Activated CD4-positive, alpha-beta memory T cell treated with anti-CD3 and anti-CD28 coated beads, Interleukin-2, amount 10 ng/mL, durations not matched to agents 7 days and 5 days (primary cell): ENCODE measurements at regions of chr11 and their contacts with region 1.

Region 1: GRCh38 chr11:62753736-62754603 is at the start of gene ZBTB3:
- DNase-seq: peak; percentile 97
- H3K4me3 Mint-ChIP-seq: peak within 1 kb of the TSS; percentile 95
- H3K27ac Mint-ChIP-seq: peak within 1 kb of the TSS; percentile 93
- H3K4me1 Mint-ChIP-seq: peaks cover 33% of the 10 kb centered on the region
- H3K27me3 Mint-ChIP-seq: no peaks in the 10 kb centered on the region
- total RNA-seq, gene ZBTB3: 13.3 to 13.4 TPM

Region 2: GRCh38 chr11:62627714-62628113 is 126.3 kb before region 1 on chr11:
- CTCF ChIA-PET with region 1: no interaction called
- POLR2A ChIA-PET with region 1: no interaction called
- DNase-seq: no peak
- H3K4me3 Mint-ChIP-seq: no peak overlapping the region
- H3K27ac Mint-ChIP-seq: no peak overlapping the region
- H3K4me1 Mint-ChIP-seq: no peaks in the 10 kb centered on the region
- H3K27me3 Mint-ChIP-seq: no peaks in the 10 kb centered on the region

Region 3: GRCh38 chr11:62771144-62772021 is 17.4 kb after region 1 on chr11 and contains the start of gene TAF6L:
- CTCF ChIA-PET with region 1: interaction called, 10 read pairs
- POLR2A ChIA-PET with region 1: interaction called, 65 read pairs
- DNase-seq: peak; percentile 96
- H3K4me3 Mint-ChIP-seq: peak within 1 kb of the TSS; percentile 87
- H3K27ac Mint-ChIP-seq: peak within 1 kb of the TSS; percentile 88
- H3K4me1 Mint-ChIP-seq: peaks cover 30% of the 10 kb centered on the region
- H3K27me3 Mint-ChIP-seq: no peaks in the 10 kb centered on the region
- total RNA-seq, gene TAF6L: 15.2 to 16.0 TPM

Region 4: GRCh38 chr11:62831520-62832335 is 77.8 kb after region 1 on chr11 and contains the start of gene STX5:
- CTCF ChIA-PET with region 1: interaction called, 8 read pairs
- POLR2A ChIA-PET with region 1: interaction called, 11 read pairs
- DNase-seq: peak; percentile 100
- H3K4me3 Mint-ChIP-seq: peak within 1 kb of the TSS; percentile 84
- H3K27ac Mint-ChIP-seq: peak within 1 kb of the TSS; percentile 91
- H3K4me1 Mint-ChIP-seq: peaks cover 33% of the 10 kb centered on the region
- H3K27me3 Mint-ChIP-seq: no peaks in the 10 kb centered on the region
- total RNA-seq, gene STX5: 40.6 to 41.6 TPM